ENCODE measurements at regions of chr12 and their contacts with region 1.

Region 1: GRCh38 chr12:18224745-18225144 is 36.6 kb upstream of the PIK3C2G start:
- DNase-seq: no peak
- H3K4me3 ChIP-seq: no peak overlapping the region
- CTCF ChIP-seq: peak; percentile 27

Region 2: GRCh38 chr12:18139989-18140596 is 84.7 kb before region 1 on chr12:
- CTCF ChIA-PET with region 1: interaction called, 38 read pairs
- POLR2A ChIA-PET with region 1: no interaction called
- DNase-seq: no peak
- H3K4me3 ChIP-seq: no peak overlapping the region
- CTCF ChIP-seq: no peak

Region 3: DNA sequence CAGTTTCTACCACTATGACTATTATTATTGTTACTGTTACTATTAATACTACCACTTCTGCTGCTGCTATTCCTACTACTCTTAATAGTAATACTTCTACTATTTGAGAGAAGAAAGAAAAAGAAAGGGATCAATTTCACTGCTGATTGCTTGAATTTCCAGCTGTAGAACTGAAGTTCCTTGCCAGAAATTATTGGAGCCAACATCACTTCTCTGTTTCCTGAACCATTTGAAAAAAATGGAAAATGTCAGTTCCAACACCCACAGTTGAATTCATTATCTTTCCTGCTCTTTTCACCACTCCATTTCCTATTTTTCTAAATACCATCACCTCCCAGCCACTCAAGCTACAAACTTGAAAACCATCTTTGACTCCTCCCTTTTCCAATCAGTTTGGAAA is 17.5 kb before region 1 on chr12:
- CTCF ChIA-PET with region 1: interaction called, 11 read pairs
- POLR2A ChIA-PET with region 1: no interaction called
- DNase-seq: no peak
- H3K4me3 ChIP-seq: no peak overlapping the region
- CTCF ChIP-seq: no peak